ENCODE measurements at regions of chr2 and their contacts with region 1.

Region 1: DNA sequence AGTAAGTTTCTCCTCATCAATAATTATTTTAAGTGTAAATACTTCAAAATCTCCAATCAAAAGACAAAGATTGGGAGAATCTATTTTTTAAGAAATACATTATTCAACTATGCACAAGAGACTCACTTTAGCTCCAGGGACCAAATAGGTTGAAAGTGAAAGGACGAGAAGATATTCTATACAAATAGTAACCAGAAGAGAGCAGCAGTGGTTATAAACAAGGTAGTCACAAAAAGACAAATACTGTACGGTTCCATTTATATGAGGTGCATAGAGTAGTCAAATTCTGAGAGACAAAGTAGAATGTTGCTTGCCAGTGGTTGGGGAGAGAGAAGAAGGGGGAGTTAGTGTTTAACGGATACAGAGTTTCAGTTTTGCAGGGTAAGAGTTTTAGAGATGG is 69.8 kb downstream of the POU3F3 start:
- DNase-seq: peak; percentile 10
- H3K4me3 ChIP-seq: no peak overlapping the region
- H3K27ac ChIP-seq: no peak overlapping the region
- H3K4me1 ChIP-seq: no peaks in the 10 kb centered on the region
- CTCF ChIP-seq: peak; percentile 60

Region 2: GRCh38 chr2:104883357-104883756 is 40.3 kb before region 1 on chr2:
- CTCF ChIA-PET with region 1: no interaction called
- POLR2A ChIA-PET with region 1: no interaction called
- intact Hi-C with region 1: no loop called
- DNase-seq: no peak
- H3K4me3 ChIP-seq: no peak overlapping the region
- H3K27ac ChIP-seq: no peak overlapping the region
- H3K4me1 ChIP-seq: peaks cover 2% of the 10 kb centered on the region
- CTCF ChIP-seq: no peak

Region 3: GRCh38 chr2:105102963-105103421 is 179.3 kb after region 1 on chr2:
- CTCF ChIA-PET with region 1: no interaction called
- POLR2A ChIA-PET with region 1: no interaction called
- intact Hi-C with region 1: loop called (anchors 10 kb)
- DNase-seq: no peak
- H3K4me3 ChIP-seq: no peak overlapping the region
- H3K27ac ChIP-seq: no peak overlapping the region
- H3K4me1 ChIP-seq: no peaks in the 10 kb centered on the region
- CTCF ChIP-seq: no peak